Naive thymus-derived CD4-positive, alpha-beta T cell (primary cell): ENCODE measurements at regions of chr17 and their contacts with region 1.

Region 1: DNA sequence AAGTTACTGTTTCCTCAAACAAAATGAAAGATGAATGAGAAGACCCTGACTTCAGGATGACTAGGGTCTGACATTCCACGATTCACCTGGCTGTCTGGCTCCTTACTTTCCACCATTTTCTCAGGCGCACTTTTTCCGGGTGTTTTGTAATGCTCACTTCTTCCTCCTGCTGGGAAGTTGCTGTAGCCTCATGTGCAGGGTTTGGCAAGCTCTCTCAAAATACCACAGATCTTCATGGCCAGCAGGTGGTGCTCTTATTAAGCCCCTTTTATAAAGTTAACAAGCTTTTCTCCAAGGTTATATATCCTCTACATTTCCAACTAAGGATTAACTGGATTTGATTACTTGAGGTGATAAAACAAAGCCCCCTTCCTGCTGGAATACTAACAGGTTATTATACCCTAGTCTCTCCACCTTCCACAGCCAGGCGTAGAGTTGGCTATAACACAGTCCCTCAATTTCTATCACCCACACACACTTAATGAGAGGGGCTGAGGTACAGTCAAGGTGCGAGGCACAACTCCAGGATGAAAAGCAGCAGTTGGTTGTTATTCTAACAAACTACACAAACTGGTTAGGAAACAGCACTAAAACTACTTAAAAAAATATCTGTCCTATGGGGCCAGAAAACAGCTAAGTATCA is 45.4 kb downstream of the STH start:
- DNase-seq: peak in 7 of 9 donors; percentile 40 to 60 (median 51)
- ATAC-seq: peak; percentile 71
- H3K4me3 ChIP-seq: no peak overlapping the region
- H3K4me3 Mint-ChIP-seq: peak overlapping the region in 1 of 10 donors; percentile 52
- H3K27ac ChIP-seq: no peak overlapping the region
- H3K27ac Mint-ChIP-seq: peak overlapping the region in 8 of 9 donors; percentile 6 to 67 (median 28)
- H3K4me1 ChIP-seq: no peaks in the 10 kb centered on the region
- H3K4me1 Mint-ChIP-seq: peaks cover 2 to 23% (median 8%) of the 10 kb centered on the region in 7 donors
- H3K27me3 ChIP-seq: no peaks in the 10 kb centered on the region
- H3K27me3 Mint-ChIP-seq: no peaks in the 10 kb centered on the region

Region 2: DNA sequence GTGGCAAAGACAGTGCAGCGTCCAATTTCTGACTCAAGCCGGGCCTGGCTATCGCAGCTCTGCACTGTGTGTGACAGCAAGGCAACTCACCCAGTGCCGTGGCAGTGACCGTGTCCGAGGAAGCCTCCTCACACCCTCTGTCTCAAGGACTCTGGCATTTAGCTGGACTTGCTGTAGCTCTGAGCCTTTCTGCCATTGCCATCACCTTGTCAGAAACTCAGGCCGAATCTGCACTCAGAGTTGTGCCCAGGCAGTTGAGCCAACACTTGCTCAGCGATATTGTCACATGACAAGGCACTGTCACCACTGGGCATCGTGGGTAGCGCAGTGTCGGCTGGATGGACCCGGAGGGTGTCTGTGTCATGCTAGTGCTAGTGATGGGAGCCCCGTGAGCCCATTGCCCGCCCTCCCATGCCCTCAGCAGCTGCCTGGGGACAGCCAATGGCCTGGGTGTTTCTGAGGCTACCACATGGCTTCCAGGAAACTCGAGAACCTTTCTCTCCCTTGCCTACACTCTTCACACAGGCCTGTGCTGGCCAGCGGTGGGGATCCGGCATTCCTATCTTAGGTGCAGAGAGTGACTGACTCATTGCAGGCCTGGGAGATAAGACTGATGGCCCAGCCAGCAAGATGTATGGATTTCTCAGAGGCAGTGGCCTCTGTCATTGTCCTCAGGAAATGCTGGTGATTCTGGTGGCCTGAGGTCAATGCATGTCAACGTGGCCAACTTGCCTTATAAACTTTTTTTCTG is 67.5 kb before region 1 on chr17:
- CTCF ChIA-PET with region 1: no interaction called
- POLR2A ChIA-PET with region 1: no interaction called
- intact Hi-C with region 1: no loop called
- DNase-seq: no peak
- ATAC-seq: no peak
- H3K4me3 ChIP-seq: no peak overlapping the region
- H3K4me3 Mint-ChIP-seq: no peak overlapping the region
- H3K27ac ChIP-seq: no peak overlapping the region
- H3K27ac Mint-ChIP-seq: no peak overlapping the region
- H3K4me1 ChIP-seq: no peaks in the 10 kb centered on the region
- H3K4me1 Mint-ChIP-seq: no peaks in the 10 kb centered on the region
- H3K27me3 ChIP-seq: no peaks in the 10 kb centered on the region
- H3K27me3 Mint-ChIP-seq: peaks cover 0 to 4% (median 0%) of the 10 kb centered on the region in 5 donors

Region 3: GRCh38 chr17:46061435-46061834 is 17.0 kb after region 1 on chr17:
- CTCF ChIA-PET with region 1: interaction called, 16 read pairs
- POLR2A ChIA-PET with region 1: interaction called, 6 read pairs
- intact Hi-C with region 1: loop called in 1 of 2 experiments (anchors 1 kb)
- DNase-seq: no peak
- ATAC-seq: peak; percentile 41
- H3K4me3 ChIP-seq: no peak overlapping the region
- H3K4me3 Mint-ChIP-seq: no peak overlapping the region
- H3K27ac ChIP-seq: no peak overlapping the region
- H3K27ac Mint-ChIP-seq: peak overlapping the region in 4 of 9 donors; percentile 22 to 69 (median 44)
- H3K4me1 ChIP-seq: no peaks in the 10 kb centered on the region
- H3K4me1 Mint-ChIP-seq: peaks cover 1 to 59% (median 39%) of the 10 kb centered on the region in 7 donors
- H3K27me3 ChIP-seq: no peaks in the 10 kb centered on the region
- H3K27me3 Mint-ChIP-seq: no peaks in the 10 kb centered on the region

Region 4: GRCh38 chr17:46212634-46213435 is 168.4 kb after region 1 on chr17:
- CTCF ChIA-PET with region 1: interaction called, 41 read pairs
- POLR2A ChIA-PET with region 1: interaction called, 13 read pairs
- intact Hi-C with region 1: loop called (anchors 1 kb)
- DNase-seq: peak in 7 of 9 donors; percentile 64 to 83 (median 77)
- ATAC-seq: peak; percentile 92
- H3K4me3 ChIP-seq: no peak overlapping the region
- H3K4me3 Mint-ChIP-seq: peak overlapping the region in 6 of 10 donors; percentile 7 to 35 (median 18)
- H3K27ac ChIP-seq: no peak overlapping the region
- H3K27ac Mint-ChIP-seq: peak overlapping the region in 8 of 9 donors; percentile 46 to 89 (median 80)
- H3K4me1 ChIP-seq: peaks cover 0 to 3% of the 10 kb centered on the region in 2 donors
- H3K4me1 Mint-ChIP-seq: peaks cover 24 to 69% (median 50%) of the 10 kb centered on the region in 7 donors
- H3K27me3 ChIP-seq: no peaks in the 10 kb centered on the region
- H3K27me3 Mint-ChIP-seq: no peaks in the 10 kb centered on the region

Region 5: DNA sequence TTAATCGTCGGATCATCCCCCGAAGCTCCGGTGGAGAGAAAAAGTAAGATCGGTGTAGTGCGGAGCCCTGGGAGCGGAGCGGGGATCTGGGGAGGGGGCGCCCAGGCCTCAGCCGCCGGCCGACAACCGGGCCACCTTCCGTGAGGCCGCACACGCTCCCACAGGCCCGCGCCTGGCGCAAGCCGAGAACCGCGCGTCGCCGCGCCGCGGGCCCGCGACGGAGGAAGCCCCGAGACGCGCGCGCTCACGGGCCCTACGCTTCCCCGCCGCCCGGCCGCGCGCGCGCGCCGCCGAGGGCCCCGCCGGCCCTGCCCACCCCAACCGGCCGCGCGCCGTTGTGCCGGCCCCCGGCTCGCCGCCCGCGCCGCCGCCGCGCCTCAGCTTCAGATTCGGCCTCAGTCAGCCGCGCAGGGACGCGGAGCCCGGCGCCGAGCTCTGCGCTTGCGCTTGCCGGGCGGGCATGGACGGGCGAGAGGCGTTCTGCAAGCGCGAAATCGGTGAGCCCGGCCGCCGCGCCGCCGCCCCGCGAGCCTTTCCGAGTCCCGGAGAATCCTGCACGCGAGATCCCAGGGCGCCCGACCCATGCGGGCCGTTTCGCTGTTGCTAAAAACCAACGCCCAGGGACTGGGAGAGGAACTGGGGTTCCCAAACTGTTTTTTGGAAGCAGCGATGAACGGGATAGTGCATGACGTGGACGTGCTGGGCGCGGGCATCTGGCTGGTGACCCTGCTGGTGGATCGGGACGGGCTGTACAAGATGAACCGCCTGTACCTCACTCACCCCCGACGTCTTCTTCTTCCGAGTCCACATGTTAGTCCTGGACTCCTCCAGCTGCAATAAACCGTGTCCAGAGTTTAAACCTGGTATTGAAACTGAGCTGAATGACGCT is 222.5 kb after region 1 on chr17:
- CTCF ChIA-PET with region 1: no interaction called
- POLR2A ChIA-PET with region 1: no interaction called
- intact Hi-C with region 1: loop called in 1 of 2 experiments (anchors 5 kb)
- DNase-seq: peak; percentile 44 to 94 (median 81)
- ATAC-seq: peak; percentile 87
- H3K4me3 ChIP-seq: peak overlapping the region; percentile 79
- H3K4me3 Mint-ChIP-seq: peak overlapping the region; percentile 89 to 96 (median 93)
- H3K27ac ChIP-seq: peak overlapping the region; percentile 79
- H3K27ac Mint-ChIP-seq: peak overlapping the region; percentile 76 to 95 (median 85)
- H3K4me1 ChIP-seq: peaks cover 25% of the 10 kb centered on the region in 2 donors
- H3K4me1 Mint-ChIP-seq: peaks cover 18 to 38% (median 34%) of the 10 kb centered on the region in 7 donors
- H3K27me3 ChIP-seq: no peaks in the 10 kb centered on the region
- H3K27me3 Mint-ChIP-seq: peaks cover 0 to 52% (median 0%) of the 10 kb centered on the region in 5 donors